Activated CD4-positive, alpha-beta memory T cell treated with anti-CD3 and anti-CD28 coated beads for 36 hours (primary cell): ENCODE measurements at regions of chr3 and their contacts with region 1.

Region 1: DNA sequence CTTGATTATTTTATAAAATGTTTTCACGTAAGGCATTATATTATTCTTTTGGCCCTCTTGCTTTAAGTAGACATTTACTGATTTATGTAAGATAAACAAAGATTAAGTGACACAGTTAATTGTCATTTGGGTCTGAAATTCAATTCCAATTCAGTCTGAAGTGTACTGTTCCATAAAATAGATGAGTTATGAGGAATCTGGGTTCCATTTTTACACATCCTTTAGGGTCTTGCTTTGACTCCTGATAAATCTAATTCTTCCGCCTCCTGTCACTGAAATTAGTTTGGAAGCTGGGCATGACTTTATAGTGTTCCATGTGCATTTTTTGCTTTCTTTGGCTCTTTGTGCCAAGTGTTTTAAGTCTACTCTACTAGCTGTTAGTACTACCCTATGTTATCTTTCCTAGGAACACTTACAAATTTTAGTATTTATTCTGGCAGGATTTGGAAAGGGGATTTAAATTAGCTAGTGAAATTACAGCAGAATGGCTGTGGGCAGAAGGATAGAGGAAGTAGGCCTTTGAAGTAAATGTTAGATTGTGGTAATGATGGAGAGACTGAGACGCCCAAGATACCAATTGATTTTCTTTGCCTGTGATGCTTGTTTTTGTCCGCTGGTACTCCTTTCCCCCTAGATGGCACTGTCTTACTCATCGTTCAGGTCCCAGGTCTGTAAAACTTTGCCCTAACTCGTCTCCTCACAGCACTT is 14.3 kb downstream of the ARL8B start:
- DNase-seq: peak; percentile 31
- H3K4me3 Mint-ChIP-seq: no peak overlapping the region
- H3K27ac Mint-ChIP-seq: peak overlapping the region; percentile 72
- H3K4me1 Mint-ChIP-seq: peaks cover 69% of the 10 kb centered on the region
- H3K27me3 Mint-ChIP-seq: no peaks in the 10 kb centered on the region

Region 2: GRCh38 chr3:5160928-5161858 is 24.8 kb after region 1 on chr3:
- CTCF ChIA-PET with region 1: no interaction called
- POLR2A ChIA-PET with region 1: no interaction called
- intact Hi-C with region 1: loop called (anchors 2 kb)
- DNase-seq: peak; percentile 61
- H3K4me3 Mint-ChIP-seq: no peak overlapping the region
- H3K27ac Mint-ChIP-seq: peak overlapping the region; percentile 78
- H3K4me1 Mint-ChIP-seq: peaks cover 71% of the 10 kb centered on the region
- H3K27me3 Mint-ChIP-seq: no peaks in the 10 kb centered on the region